ENCODE measurements at regions of chr20 and their contacts with region 1.

Region 1: DNA sequence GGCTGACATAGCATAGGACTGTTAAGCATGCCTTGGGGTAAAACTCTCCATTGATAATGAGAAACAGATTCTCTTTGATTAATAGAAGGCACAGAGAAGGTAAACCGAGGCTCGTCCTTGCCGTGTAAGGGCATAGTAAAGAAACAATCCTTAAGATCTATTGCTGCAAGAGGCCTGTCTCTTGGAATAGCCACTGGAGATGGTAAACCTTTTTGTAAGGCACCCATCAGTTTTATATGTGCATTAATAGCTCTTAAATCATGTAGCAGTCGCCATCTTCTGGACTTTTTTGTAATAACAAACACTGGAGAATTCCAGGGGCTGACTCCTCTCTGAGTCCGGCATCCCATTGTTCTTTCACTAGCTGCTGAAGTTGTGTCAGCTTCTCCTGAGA is 8.4 kb upstream of the ABHD12 start:
- DNase-seq: no peak
- ATAC-seq: peak; percentile 81 to 82
- H3K4me3 ChIP-seq: no peak overlapping the region
- H3K27ac ChIP-seq: no peak overlapping the region
- H3K4me1 ChIP-seq: no peaks in the 10 kb centered on the region
- H3K27me3 ChIP-seq: no peaks in the 10 kb centered on the region

Region 2: GRCh38 chr20:25022687-25023086 is 376.3 kb before region 1 on chr20:
- intact Hi-C with region 1: no loop called
- DNase-seq: peak in 1 of 3 donors; percentile 74
- ATAC-seq: peak; percentile 29 to 50
- H3K4me3 ChIP-seq: no peak overlapping the region
- H3K27ac ChIP-seq: no peak overlapping the region
- H3K4me1 ChIP-seq: peaks cover 5% of the 10 kb centered on the region
- H3K27me3 ChIP-seq: no peaks in the 10 kb centered on the region

Region 3: DNA sequence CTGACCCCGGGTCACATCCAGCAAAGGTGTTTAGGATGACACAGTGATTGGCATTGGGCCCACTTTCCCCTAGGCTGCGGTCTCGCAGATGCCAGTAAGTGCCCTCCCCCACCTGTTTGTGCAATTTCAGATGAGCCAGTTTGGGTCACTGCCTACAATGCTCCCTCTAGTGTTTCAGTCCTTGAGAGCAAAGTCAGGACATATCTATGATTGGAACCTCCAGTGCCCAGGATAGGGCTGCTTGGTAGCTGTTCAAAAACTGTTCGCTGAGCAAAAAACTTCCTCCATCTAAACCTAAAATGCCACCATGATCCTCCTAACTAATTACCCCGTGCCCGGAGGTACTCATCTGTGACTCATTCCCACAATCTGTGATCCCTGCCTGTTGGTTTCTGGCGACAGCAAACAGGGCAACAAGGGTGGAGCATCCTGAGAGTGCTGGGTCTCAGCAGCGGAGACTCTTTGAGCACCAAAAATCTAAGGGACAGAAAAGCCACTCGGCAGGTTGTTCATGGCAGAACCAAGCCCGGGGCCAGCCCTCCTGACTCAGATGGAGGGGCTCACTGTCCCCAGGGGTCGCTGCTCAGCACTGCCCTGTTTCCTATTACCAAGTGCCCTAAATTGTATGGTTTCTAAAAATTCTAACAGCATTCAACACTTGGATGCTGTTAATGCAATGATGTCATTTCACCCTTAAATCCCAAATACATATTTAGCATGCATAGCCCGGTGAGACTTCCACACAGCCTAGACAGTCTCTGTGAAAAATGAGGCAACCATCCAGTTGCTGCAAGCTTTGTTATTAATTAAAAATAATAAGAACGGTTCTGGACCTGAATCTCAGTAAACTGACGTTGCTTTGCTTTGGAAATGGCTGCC is 322.1 kb before region 1 on chr20:
- intact Hi-C with region 1: loop called in 1 of 4 experiments (anchors 5 kb)
- DNase-seq: no peak
- ATAC-seq: peak; percentile 27 to 42
- H3K4me3 ChIP-seq: no peak overlapping the region
- H3K27ac ChIP-seq: no peak overlapping the region
- H3K4me1 ChIP-seq: no peaks in the 10 kb centered on the region
- H3K27me3 ChIP-seq: no peaks in the 10 kb centered on the region

Region 4: GRCh38 chr20:25247956-25248785 is 150.9 kb before region 1 on chr20 and contains the start of gene PYGB:
- intact Hi-C with region 1: no loop called
- DNase-seq: peak; percentile 80 to 92 (median 90)
- ATAC-seq: peak; percentile 89 to 94
- H3K4me3 ChIP-seq: peak within 1 kb of the TSS; percentile 90
- H3K27ac ChIP-seq: peak within 1 kb of the TSS; percentile 93
- H3K4me1 ChIP-seq: peaks cover 14% of the 10 kb centered on the region
- H3K27me3 ChIP-seq: no peaks in the 10 kb centered on the region
- total RNA-seq, gene PYGB: 154 to 219 (median 194) TPM

Region 5: DNA sequence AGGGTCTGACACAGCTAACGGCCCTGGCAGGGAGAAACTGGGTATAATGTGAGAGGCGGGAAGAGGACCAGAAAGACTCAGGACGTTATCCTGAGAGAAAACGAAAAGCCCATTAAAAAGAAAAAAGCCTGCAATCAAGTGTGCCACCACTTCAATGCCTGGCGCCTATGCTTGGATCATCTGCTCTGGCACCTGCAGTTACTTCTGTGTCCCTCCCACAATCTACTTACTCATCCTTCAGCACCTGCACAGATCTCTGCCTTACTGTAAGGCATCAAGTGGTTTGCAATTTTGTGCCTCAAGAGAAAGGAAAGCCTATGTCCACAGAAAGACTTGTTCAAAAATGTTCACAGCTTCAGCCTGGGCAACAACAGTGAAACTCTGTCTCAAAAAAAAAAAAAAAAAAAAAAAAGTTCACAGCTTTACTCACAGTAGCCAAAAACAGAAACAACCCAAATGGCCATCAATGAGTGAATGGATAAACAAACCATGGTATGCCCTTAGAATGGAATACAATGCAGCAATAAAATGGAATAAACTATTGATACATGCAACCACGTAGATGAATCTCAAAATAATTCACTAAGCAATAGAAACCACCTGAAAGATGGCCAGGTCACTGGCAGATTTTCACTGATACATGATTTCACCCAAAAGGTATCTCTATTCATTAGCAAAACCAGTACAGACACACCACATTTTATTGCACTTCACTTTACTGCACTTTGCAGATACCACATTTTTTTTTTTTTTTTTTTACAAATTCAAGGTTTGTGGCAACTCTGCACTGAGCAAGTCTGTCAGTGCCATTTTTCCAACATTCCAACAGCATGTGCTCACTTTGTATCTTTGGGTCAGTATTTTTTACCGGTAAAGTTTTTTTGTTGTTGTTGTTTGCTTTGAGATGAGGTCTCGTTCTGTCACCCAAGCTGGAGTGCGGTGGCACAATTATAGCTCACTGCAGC is 57.0 kb before region 1 on chr20:
- intact Hi-C with region 1: no loop called
- DNase-seq: no peak
- ATAC-seq: no peak
- H3K4me3 ChIP-seq: no peak overlapping the region
- H3K27ac ChIP-seq: no peak overlapping the region
- H3K4me1 ChIP-seq: peaks cover 3% of the 10 kb centered on the region
- H3K27me3 ChIP-seq: no peaks in the 10 kb centered on the region

Region 6: GRCh38 chr20:25761596-25761995 is 362.6 kb after region 1 on chr20:
- intact Hi-C with region 1: no loop called
- DNase-seq: no peak
- ATAC-seq: no peak
- H3K4me3 ChIP-seq: no peak overlapping the region
- H3K27ac ChIP-seq: no peak overlapping the region
- H3K4me1 ChIP-seq: no peaks in the 10 kb centered on the region
- H3K27me3 ChIP-seq: no peaks in the 10 kb centered on the region

Measured in right cardiac atrium (tissue), 5 donors.